T-cell (primary cell): ENCODE measurements at regions of chr10 and their contacts with region 1.

Region 1: GRCh38 chr10:26457088-26457487 is 18.9 kb downstream of the APBB1IP start:
- DNase-seq: no peak
- ATAC-seq: no peak
- H3K4me3 ChIP-seq: no peak overlapping the region
- H3K4me3 Mint-ChIP-seq: peak overlapping the region; percentile 1 to 57 (median 4)
- H3K27ac ChIP-seq: peak overlapping the region; percentile 8
- H3K27ac Mint-ChIP-seq: peak overlapping the region; percentile 56 to 76
- H3K4me1 ChIP-seq: peaks cover 22 to 48% of the 10 kb centered on the region in 2 experiments
- H3K4me1 Mint-ChIP-seq: peaks cover 76 to 80% (median 77%) of the 10 kb centered on the region in 3 donors
- H3K27me3 ChIP-seq: no peaks in the 10 kb centered on the region
- H3K27me3 Mint-ChIP-seq: no peaks in the 10 kb centered on the region

Region 2: GRCh38 chr10:26412932-26413331 is 44.2 kb before region 1 on chr10:
- CTCF ChIA-PET with region 1: no interaction called
- POLR2A ChIA-PET with region 1: no interaction called
- DNase-seq: no peak
- ATAC-seq: no peak
- H3K4me3 ChIP-seq: no peak overlapping the region
- H3K4me3 Mint-ChIP-seq: no peak overlapping the region
- H3K27ac ChIP-seq: no peak overlapping the region
- H3K27ac Mint-ChIP-seq: no peak overlapping the region
- H3K4me1 ChIP-seq: no peaks in the 10 kb centered on the region
- H3K4me1 Mint-ChIP-seq: peaks cover 0 to 6% (median 2%) of the 10 kb centered on the region in 3 donors
- H3K27me3 ChIP-seq: no peaks in the 10 kb centered on the region
- H3K27me3 Mint-ChIP-seq: no peaks in the 10 kb centered on the region

Region 3: DNA sequence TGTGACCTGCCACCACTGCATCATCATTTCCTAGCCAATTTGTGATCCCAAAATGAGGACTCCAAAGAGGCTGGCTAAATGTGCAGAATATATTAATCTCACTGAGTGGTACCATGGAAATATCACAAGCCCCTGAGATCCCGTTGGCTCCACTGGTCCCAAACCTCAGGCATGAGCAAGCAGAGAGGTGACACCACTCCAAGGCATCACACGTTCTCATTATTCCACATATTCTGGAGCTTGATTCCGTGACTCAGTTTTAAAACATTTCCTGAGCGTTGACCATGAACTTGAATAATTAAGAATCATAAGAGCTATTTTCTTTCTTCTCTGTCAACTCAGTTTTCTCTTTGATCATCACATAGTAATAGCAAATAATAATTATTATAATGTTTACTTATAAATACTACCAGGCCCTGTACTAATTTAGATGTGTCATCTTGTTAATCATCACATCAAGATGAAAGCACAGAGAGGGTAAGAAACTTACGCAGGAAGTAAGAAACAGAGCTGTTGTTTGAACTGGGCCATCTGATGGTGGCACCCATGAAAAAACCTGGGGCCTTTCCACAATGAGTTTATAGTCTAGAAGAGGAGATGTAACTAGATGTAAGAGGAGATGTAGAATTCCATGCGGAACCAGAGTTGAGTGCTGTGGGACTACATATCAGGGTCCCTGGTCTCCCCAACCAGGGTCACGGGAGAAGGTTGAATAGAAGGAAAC is 15.4 kb before region 1 on chr10:
- CTCF ChIA-PET with region 1: interaction called in 1 of 2 experiments, 5 read pairs
- POLR2A ChIA-PET with region 1: interaction called, 3 to 11 read pairs
- DNase-seq: peak in 2 of 35 experiments; percentile 16 to 64
- ATAC-seq: no peak
- H3K4me3 ChIP-seq: peak overlapping the region; percentile 16 to 36
- H3K4me3 Mint-ChIP-seq: peak overlapping the region; percentile 80 to 98 (median 93)
- H3K27ac ChIP-seq: peak overlapping the region; percentile 87
- H3K27ac Mint-ChIP-seq: peak overlapping the region; percentile 93 to 97
- H3K4me1 ChIP-seq: peaks cover 34 to 44% of the 10 kb centered on the region in 2 experiments
- H3K4me1 Mint-ChIP-seq: peaks cover 64 to 74% (median 66%) of the 10 kb centered on the region in 3 donors
- H3K27me3 ChIP-seq: no peaks in the 10 kb centered on the region
- H3K27me3 Mint-ChIP-seq: no peaks in the 10 kb centered on the region

Region 4: DNA sequence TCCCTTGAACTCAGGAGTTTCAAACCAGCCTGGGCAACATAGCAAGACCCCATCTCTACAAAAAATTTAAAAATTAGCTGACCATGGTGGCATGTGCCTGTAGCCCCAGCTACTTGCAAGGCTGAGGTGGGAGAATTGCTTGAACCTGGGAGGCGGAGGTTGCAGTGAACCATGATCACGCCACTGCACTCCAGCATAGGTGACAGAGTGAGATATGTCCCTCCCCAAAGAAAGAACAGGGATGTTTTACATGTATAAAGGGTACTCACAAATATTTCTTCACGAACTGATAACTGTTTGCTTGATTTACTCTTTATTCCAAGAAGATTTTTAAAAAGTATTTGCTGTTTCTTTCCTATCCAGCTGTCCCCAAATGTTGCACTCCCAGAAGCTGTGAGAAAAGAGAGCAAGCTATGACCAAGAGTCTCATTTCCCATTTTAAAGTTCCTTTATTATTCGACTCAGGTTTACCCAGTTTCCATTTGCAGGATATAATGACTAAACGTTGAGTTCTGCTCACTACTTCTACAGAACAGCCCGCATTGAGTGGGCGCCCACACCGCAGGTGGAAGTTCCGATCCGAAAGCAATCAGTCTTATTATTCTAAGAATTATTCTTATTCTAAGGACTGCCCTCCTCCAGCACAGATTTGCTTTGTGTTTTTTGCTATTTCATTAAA is 71.8 kb after region 1 on chr10:
- CTCF ChIA-PET with region 1: interaction called in 1 of 2 experiments, 10 read pairs
- POLR2A ChIA-PET with region 1: no interaction called
- DNase-seq: no peak
- ATAC-seq: no peak
- H3K4me3 ChIP-seq: no peak overlapping the region
- H3K4me3 Mint-ChIP-seq: no peak overlapping the region
- H3K27ac ChIP-seq: no peak overlapping the region
- H3K27ac Mint-ChIP-seq: peak overlapping the region; percentile 28 to 40
- H3K4me1 ChIP-seq: no peaks in the 10 kb centered on the region
- H3K4me1 Mint-ChIP-seq: peaks cover 14 to 17% (median 17%) of the 10 kb centered on the region in 3 donors
- H3K27me3 ChIP-seq: no peaks in the 10 kb centered on the region
- H3K27me3 Mint-ChIP-seq: no peaks in the 10 kb centered on the region

Region 5: GRCh38 chr10:27542812-27543211 is 1085.7 kb after region 1 on chr10:
- CTCF ChIA-PET with region 1: no interaction called
- POLR2A ChIA-PET with region 1: interaction called in 1 of 2 experiments, 13 read pairs
- DNase-seq: no peak
- ATAC-seq: no peak
- H3K4me3 ChIP-seq: no peak overlapping the region
- H3K4me3 Mint-ChIP-seq: peak overlapping the region in 1 of 3 donors; percentile 38
- H3K27ac ChIP-seq: peak overlapping the region; percentile 52
- H3K27ac Mint-ChIP-seq: peak overlapping the region; percentile 60 to 74
- H3K4me1 ChIP-seq: peaks cover 6 to 17% of the 10 kb centered on the region in 2 experiments
- H3K4me1 Mint-ChIP-seq: peaks cover 28 to 48% (median 38%) of the 10 kb centered on the region in 3 donors
- H3K27me3 ChIP-seq: no peaks in the 10 kb centered on the region
- H3K27me3 Mint-ChIP-seq: no peaks in the 10 kb centered on the region